Activated T-helper 1 cell treated with anti-CD3 and anti-CD28 coated beads, Interleukin-12 subunit alpha, Interleukin-12 subunit beta, Interleukin-2, Interleukin-4 antibody, amounts not matched to agents 30 ng/mL and 10 ng/mL and 1 ng/mL, durations not matched to agents 14 hours and 24 hours and 36 hours (primary cell): ENCODE measurements at regions of chr6 and their contacts with region 1.

Region 1: GRCh38 chr6:41545703-41546474 is at the start of gene FOXP4:
- DNase-seq: peak; percentile 77
- H3K4me3 Mint-ChIP-seq: peak within 1 kb of the TSS; percentile 88
- H3K27ac Mint-ChIP-seq: peak within 1 kb of the TSS; percentile 90
- H3K4me1 Mint-ChIP-seq: peaks cover 34% of the 10 kb centered on the region
- H3K27me3 Mint-ChIP-seq: peaks cover 39% of the 10 kb centered on the region
- total RNA-seq, gene FOXP4: 21.6 and 24.0 TPM in 2 replicates

Region 2: DNA sequence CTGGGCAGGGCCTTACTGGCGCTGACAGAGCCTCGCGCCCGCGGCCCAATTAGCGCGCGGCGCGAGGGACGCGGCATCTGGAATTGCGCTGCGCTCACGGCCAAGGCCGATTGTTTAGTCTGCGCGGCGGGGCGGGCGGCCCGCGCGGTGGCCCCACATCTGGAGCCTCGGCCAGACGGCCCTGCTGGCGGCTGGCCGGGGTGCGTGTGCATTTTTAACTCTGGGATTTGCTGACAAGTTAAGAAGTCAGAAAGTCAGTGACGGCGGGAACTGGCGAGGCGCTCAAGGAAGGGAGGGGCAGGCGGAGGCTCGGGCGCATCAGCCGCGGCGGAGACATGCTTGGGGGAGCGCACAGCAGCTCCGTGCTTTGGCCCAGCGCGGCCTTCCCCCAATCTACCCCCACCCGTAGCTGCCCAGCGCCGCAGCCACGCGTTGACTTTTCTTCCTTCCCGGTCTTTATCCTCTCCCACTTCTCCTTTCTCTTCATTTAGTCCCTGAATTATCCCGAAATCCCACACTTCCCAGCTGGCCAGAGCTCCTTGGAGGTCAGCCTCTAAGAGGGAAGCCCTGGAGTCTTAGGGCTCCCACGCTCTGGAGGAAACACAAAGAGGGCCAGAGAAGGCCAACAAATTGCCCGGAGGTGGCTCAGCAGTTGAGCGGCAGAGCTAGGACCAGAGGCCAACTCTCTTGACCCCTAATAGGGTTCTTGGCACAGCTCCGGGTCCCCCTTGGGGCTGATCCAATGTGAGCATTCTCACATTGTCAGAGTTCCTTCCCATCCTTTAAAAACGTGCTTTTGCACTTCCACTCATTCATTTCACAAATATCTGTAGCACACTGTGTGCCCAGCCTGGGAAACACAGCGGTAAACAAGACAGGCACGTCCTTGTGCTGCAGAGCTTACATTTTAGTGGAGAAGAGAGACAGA is 40.5 kb before region 1 on chr6:
- intact Hi-C with region 1: loop called (anchors 2 kb)
- DNase-seq: no peak
- H3K4me3 Mint-ChIP-seq: peak overlapping the region; percentile 52
- H3K27ac Mint-ChIP-seq: no peak overlapping the region
- H3K4me1 Mint-ChIP-seq: peaks cover 6% of the 10 kb centered on the region
- H3K27me3 Mint-ChIP-seq: peaks cover 72% of the 10 kb centered on the region

Region 3: DNA sequence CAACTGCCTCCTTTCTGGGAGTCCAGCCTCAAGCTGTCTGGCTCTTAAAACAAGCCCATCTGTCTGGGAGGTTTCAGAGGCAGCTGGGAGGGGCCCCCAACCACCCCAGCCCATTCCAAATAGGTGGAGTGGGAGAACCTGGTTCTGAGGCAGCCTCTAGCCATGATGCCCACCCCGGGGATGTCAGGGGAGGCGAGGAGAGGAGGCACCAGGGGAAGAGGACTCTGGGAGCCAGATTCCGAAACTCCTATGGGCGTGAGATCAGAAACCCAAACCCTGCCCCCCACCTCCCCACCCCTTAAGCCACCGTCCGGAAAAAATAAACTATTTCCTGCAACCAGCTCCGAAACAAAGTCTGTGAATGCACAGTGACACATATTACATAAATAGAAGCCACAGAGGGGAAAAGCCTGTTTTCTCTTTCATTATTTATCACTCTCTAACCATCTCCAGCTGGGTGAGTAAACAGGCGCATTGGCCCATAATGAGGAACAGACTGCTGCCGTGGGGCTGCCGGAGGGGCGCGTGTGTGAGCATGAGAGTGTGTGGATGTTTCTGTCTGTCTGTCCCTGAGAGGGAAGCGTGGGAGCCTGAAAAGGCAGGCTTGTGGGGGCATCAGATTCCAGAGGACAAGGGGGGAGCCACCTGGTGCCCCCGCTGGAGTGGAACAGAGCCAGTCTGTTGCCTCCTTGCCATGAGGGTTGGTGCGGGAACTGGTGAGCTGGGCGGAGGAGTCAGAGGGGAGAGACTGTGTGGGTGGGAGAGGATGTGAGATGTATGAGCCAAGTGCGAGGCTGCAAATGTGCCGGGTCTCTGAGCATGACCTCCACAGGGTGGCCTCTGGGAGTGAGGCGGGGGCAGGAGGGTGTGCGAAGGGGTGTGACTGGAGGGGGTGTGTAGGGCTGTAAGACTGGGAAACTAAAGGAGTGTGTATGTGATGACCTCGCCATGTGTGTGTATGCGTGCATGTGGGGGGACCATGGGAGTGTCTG is 14.0 kb before region 1 on chr6:
- intact Hi-C with region 1: loop called (anchors 1 kb)
- DNase-seq: peak; percentile 63
- H3K4me3 Mint-ChIP-seq: peak overlapping the region; percentile 76
- H3K27ac Mint-ChIP-seq: peak overlapping the region; percentile 92
- H3K4me1 Mint-ChIP-seq: peaks cover 50% of the 10 kb centered on the region
- H3K27me3 Mint-ChIP-seq: peaks cover 38% of the 10 kb centered on the region

Region 4: DNA sequence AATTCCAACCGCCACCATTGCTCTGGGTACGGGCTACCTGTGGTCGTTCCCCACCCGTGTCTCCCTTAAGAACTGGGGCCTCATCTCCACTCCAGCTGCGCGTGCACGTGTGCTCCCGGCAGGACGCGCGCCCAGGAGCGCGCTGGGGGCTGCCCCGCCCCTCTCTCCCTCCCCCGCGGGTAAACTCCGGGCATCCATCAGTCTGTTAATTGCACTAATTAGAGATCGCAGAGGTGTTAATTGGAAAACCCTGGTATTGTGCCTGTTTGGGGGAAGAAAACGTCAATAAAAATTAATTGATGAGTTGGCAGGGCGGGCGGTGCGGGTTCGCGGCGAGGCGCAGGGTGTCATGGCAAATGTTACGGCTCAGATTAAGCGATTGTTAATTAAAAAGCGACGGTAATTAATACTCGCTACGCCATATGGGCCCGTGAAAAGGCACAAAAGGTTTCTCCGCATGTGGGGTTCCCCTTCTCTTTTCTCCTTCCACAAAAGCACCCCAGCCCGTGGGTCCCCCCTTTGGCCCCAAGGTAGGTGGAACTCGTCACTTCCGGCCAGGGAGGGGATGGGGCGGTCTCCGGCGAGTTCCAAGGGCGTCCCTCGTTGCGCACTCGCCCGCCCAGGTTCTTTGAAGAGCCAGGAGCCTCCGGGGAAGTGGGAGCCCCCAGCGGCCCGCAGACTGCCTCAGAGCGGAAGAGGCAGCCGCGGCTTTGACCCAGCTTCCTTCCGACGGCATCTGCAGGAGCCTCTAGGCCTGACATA is 14.7 kb after region 1 on chr6:
- intact Hi-C with region 1: loop called (anchors 1 kb)
- DNase-seq: peak; percentile 79
- H3K4me3 Mint-ChIP-seq: peak overlapping the region; percentile 87
- H3K27ac Mint-ChIP-seq: peak overlapping the region; percentile 82
- H3K4me1 Mint-ChIP-seq: peaks cover 23% of the 10 kb centered on the region
- H3K27me3 Mint-ChIP-seq: peaks cover 35% of the 10 kb centered on the region

Region 5: DNA sequence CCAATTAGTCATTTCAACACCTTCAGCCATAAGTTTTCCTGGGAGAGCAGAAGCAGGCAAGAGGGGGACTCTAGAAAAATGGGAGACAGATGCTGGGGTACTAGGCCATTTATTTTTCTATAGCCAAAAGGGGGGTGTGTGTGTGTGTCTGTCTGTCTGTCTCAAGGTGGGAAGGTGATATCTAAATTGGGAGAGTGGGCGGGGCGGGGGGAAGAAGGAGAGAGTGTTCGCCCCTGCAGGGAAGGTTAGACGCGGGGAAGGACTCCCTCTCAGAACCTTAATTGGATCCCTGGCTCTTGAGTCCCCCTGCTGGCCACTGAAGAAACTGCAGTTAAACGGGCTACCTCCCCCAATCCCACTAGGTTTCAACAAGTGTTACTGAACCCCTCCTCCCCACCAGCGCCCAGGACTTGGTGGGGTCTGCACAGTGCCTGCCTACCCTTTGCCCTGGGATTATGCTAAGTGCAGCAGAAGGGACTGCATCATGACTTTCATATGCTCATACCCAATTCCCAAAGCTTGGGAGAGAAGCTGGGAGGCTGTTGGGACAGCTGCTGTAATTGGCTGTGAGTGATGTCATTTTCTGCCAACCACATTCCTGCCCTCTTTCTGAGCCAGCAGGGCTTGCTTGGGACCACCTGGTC is 46.1 kb after region 1 on chr6:
- intact Hi-C with region 1: loop called (anchors 5 kb)
- DNase-seq: peak; percentile 60
- H3K4me3 Mint-ChIP-seq: no peak overlapping the region
- H3K27ac Mint-ChIP-seq: no peak overlapping the region
- H3K4me1 Mint-ChIP-seq: no peaks in the 10 kb centered on the region
- H3K27me3 Mint-ChIP-seq: no peaks in the 10 kb centered on the region

Region 6: DNA sequence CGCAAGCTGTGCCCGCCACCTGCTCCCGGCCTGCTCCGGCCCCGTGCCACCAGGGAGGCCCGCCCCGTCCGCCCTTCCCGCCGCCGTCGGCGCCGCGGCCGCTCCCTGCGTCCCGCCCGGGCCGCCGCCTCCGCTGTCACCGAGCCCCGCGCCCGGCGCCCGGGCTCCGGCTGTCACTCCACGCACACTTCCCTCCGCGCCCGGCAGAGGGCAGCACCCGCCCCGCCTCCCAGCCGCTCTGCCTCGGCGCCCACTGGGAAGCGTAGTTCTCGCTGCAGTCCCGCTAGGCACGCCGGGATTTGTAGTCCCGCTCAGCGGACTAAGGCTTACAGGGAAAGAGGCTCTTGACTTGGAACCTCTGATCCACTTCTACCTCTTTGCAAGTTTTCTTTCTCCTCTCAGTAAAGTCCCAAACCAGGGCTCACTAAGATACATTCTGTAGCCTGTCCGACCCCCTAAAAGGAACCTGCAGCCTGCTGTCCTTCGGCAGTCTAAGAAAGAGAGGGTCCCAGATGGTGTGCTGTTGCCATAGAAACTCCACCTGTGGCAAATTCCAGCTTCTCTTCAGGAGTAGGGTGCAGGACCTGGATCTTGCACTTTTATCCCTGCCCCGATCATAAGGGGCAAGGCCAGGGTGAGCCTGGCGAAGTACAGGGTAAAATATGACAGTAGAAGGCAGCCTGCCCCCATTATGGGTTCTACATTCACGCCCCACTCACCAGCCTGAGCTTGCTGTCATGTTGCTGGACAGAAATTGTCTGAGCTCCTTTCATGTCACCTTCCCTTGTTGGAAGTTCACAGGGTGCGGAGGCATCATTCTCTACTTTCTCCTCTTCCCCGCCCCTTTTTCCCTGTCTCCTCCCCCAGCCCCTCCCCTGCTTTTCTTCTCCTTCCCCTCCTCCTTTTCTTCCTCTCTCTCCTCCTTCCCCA is 189.8 kb after region 1 on chr6 and contains the start of gene TFEB:
- intact Hi-C with region 1: loop called (anchors 5 kb)
- DNase-seq: peak; percentile 92
- H3K4me3 Mint-ChIP-seq: peak within 1 kb of the TSS; percentile 80
- H3K27ac Mint-ChIP-seq: peak within 1 kb of the TSS; percentile 31
- H3K4me1 Mint-ChIP-seq: peaks cover 23% of the 10 kb centered on the region
- H3K27me3 Mint-ChIP-seq: no peaks in the 10 kb centered on the region
- total RNA-seq, gene TFEB: 15.6 and 17.2 TPM in 2 replicates